Right lobe of liver (tissue), 6 donors: ENCODE measurements at regions of chr11 and their contacts with region 1.

Region 1: DNA sequence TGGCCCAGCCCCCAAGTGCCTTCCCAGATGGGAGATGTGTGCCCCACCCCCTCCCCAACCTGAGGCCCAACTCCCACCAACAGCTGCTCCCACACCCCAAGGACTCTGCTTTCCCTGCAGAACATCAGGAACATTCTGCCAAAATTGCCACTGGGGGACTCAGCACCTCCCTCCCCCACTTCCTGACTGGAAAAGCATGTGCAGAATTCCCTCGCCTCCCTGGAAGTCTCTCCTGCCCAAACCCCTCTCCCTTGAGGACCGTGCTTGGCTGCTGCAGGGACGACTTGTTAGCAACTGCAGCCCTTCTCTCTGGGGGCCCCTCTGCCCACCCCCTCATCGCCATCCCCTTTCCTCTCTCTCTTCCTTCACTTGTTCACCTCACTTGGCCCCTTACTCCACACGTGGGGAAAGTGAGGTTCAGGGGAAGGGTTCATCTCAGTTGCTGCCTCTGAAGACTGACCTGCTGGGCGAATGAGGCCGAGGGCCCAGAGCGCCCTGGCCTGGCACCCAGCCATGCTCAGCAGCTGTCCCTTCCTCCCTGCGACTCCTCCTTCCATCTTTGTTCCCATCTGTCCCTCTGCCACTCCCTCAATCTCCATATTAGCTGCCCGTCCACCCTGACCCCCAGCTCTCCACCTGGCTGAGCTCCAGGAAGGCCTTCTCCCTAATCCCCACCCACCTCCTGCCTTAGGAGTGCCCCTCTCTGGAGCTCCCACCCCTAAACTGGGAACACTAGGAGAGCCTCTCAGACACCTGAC is 105.1 kb downstream of the CHST1 start:
- DNase-seq: no peak
- ATAC-seq: no peak
- H3K4me3 ChIP-seq: no peak overlapping the region
- H3K27ac ChIP-seq: no peak overlapping the region
- H3K4me1 ChIP-seq: no peaks in the 10 kb centered on the region
- H3K27me3 ChIP-seq: no peaks in the 10 kb centered on the region
- CTCF ChIP-seq: no peak
- POLR2A ChIP-seq: no peak

Region 2: DNA sequence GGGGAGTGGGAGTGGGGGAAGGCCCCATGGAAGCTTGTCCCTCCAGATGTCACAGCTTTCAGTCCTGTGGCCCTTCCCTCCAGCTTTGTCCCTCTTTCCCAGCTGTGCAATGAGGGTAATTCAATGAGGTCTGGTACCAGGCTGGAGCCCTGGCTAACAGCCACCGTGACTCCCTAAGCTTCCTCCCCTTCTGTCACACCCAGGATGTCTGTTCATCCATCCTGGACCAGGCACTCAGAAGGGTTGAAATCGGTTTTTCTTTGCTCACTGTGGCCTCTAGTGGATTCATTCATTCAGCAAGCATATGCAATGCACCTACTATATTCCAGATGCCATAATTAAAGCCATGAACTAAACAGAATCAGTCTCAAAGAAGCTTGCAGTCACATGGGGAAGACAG is 312.9 kb before region 1 on chr11:
- intact Hi-C with region 1: no loop called
- DNase-seq: no peak
- ATAC-seq: no peak
- H3K4me3 ChIP-seq: no peak overlapping the region
- H3K27ac ChIP-seq: no peak overlapping the region
- H3K4me1 ChIP-seq: no peaks in the 10 kb centered on the region
- H3K27me3 ChIP-seq: no peaks in the 10 kb centered on the region
- CTCF ChIP-seq: no peak
- POLR2A ChIP-seq: no peak

Region 3: DNA sequence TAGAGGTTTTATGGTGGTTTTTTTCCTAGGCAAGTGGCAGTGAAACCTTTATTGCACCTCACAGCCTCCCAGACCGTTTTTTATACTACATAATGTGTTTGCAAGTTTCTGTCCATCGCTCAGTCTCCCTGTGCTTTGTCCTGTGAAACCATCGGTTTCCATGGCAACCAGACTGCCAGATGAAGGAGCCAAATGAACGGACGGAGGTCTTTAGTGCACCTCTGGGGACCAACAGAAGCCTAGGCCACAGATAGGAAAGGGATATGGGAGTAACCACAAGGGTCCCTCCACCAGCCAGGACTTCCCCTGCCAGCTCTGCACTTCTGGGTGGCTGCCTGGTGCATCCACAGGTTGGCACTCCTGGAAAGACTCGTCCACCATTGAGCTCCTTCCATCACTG is 59.9 kb before region 1 on chr11:
- intact Hi-C with region 1: loop called in 1 of 2 experiments (anchors 10 kb)
- DNase-seq: no peak
- ATAC-seq: no peak
- H3K4me3 ChIP-seq: no peak overlapping the region
- H3K27ac ChIP-seq: no peak overlapping the region
- H3K4me1 ChIP-seq: no peaks in the 10 kb centered on the region
- H3K27me3 ChIP-seq: no peaks in the 10 kb centered on the region
- CTCF ChIP-seq: no peak
- POLR2A ChIP-seq: no peak